A673 (cell line): ENCODE measurements at regions of chr2 and their contacts with region 1.

Region 1: GRCh38 chr2:216151313-216152030 is 42.3 kb downstream of the XRCC5 start:
- DNase-seq: peak; percentile 27
- H3K4me3 ChIP-seq: no peak overlapping the region
- H3K27ac ChIP-seq: no peak overlapping the region
- H3K4me1 ChIP-seq: no peaks in the 10 kb centered on the region
- H3K27me3 ChIP-seq: no peaks in the 10 kb centered on the region
- CTCF ChIP-seq: peak; percentile 42

Region 2: GRCh38 chr2:214378277-214379116 is 1773.0 kb before region 1 on chr2:
- CTCF ChIA-PET with region 1: no interaction called
- POLR2A ChIA-PET with region 1: no interaction called
- intact Hi-C with region 1: no loop called
- DNase-seq: no peak
- H3K4me3 ChIP-seq: no peak overlapping the region
- H3K27ac ChIP-seq: no peak overlapping the region
- H3K4me1 ChIP-seq: no peaks in the 10 kb centered on the region
- H3K27me3 ChIP-seq: no peaks in the 10 kb centered on the region
- CTCF ChIP-seq: no peak

Region 3: GRCh38 chr2:215249501-215249900 is 902.0 kb before region 1 on chr2:
- CTCF ChIA-PET with region 1: no interaction called
- POLR2A ChIA-PET with region 1: no interaction called
- intact Hi-C with region 1: no loop called
- DNase-seq: no peak
- H3K4me3 ChIP-seq: no peak overlapping the region
- H3K27ac ChIP-seq: no peak overlapping the region
- H3K4me1 ChIP-seq: no peaks in the 10 kb centered on the region
- H3K27me3 ChIP-seq: no peaks in the 10 kb centered on the region
- CTCF ChIP-seq: no peak

Region 4: DNA sequence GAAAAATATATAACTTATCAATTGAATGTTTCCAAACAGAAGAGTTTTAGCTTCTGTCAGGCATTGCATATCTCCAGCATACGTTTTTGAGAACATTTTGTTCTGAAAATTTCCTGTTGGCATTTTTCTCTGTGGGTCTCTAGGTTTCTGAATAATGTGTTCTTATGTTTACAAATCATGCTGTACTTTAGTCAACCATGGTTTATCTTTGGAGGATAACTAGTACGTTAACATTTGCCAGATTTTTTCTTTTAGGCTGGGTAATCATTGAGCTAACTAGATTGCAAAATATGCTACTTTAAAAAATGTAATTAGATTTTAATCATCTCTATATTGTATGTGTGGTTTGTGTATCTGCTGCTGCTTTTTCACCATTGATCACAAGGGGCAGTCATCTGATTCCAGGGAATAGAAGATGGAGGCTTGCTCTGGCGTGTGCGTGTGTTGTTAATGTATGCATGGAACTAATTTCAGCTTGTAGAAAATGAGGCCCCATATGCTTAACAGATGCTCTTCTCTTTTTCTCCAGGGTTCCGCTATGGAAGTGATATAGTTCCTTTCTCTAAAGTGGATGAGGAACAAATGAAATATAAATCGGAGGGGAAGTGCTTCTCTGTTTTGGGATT is 21.0 kb before region 1 on chr2:
- CTCF ChIA-PET with region 1: no interaction called
- POLR2A ChIA-PET with region 1: interaction called, 16 read pairs
- intact Hi-C with region 1: no loop called
- DNase-seq: no peak
- H3K4me3 ChIP-seq: no peak overlapping the region
- H3K27ac ChIP-seq: no peak overlapping the region
- H3K4me1 ChIP-seq: no peaks in the 10 kb centered on the region
- H3K27me3 ChIP-seq: no peaks in the 10 kb centered on the region
- CTCF ChIP-seq: 0 out of 2 replicates have a peak, but pooled peaks have one; percentile 21

Region 5: DNA sequence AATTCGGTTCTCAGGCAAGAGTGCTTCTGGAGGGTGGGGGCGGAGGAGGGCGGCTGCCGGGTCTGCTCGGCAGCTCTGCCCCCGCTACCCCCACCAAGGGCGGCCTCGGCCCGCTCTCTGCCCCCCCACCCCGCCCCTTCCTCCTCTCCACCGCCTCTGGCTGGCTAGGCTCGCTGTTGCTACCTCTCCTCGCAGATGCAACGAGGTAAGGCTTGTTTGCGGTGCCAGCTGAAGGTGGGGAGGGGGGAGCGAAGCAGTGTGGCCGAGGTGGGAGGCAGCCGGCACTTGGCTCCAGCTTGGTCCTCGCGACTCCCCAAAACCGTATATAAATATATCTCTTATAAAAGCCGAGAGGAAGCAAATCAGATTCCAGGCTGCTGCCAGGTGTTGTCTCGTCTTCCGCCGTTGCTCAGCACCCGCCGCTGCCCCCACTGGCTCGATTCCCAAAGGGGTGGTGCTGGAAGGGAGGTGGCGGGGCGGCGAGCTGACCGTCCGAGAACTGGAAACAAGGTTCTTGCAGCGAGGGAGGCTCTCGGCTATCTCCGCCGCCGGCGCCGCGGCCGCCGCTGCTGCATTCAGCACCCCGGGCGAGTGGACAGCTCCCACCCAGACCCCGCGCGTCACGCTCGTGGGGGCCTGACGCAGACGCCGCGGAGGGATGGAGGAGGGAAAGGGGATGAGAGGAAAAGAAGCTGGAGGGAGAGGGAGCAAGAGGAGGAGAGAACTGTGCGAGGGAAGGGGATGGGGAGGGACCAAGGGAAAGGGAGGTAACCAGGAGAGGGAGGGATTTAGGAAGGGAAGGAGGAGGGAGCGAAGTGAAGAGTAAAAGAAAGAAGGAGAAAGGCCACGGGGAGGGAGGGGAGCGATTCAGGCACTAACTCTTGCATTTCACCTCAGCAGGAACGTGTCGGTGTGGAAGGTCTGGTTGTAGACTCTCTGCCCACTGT is 220.6 kb after region 1 on chr2 and contains the start of gene MARCHF4:
- CTCF ChIA-PET with region 1: no interaction called
- POLR2A ChIA-PET with region 1: no interaction called
- intact Hi-C with region 1: no loop called
- DNase-seq: peak; percentile 83
- H3K4me3 ChIP-seq: peak within 1 kb of the TSS; percentile 48
- H3K27ac ChIP-seq: no peak within 1 kb of the TSS
- H3K4me1 ChIP-seq: peaks cover 28% of the 10 kb centered on the region
- H3K27me3 ChIP-seq: peaks cover 21% of the 10 kb centered on the region
- CTCF ChIP-seq: no peak
- total RNA-seq, gene MARCHF4: 2.4 and 6.1 TPM in 2 replicates

Region 6: DNA sequence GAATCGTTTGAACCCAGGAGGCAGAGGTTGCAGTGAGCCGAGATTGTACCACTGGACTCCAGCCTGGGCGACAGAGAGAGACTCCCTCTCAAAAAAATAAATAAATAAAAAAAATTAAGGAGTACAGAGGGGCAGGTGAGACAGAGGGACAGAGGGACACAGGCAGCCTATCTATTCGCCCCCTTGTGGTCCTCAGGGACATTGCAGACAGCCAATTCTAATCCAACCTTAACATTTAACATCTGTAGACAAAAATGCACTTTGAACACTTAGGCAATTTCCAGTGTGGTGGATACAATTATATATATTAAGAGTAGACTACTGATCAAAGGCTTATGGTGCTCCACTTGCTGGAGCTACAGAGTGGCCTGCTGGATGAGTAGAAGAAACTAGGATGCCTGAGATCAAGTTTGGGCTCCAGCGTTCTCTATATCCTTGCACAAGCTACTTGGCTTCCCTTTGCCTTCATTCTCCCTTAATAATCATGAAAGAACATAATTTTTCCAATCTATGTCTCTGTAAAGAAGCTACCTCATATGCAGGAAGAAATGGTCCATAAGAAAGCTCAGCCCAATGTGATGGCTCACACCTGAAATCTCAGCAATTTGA is 252.6 kb after region 1 on chr2:
- CTCF ChIA-PET with region 1: no interaction called
- POLR2A ChIA-PET with region 1: no interaction called
- intact Hi-C with region 1: loop called (anchors 10 kb)
- DNase-seq: peak; percentile 54
- H3K4me3 ChIP-seq: no peak overlapping the region
- H3K27ac ChIP-seq: no peak overlapping the region
- H3K4me1 ChIP-seq: no peaks in the 10 kb centered on the region
- H3K27me3 ChIP-seq: no peaks in the 10 kb centered on the region
- CTCF ChIP-seq: peak; percentile 83

Region 7: GRCh38 chr2:216807857-216808272 is 656.4 kb after region 1 on chr2:
- CTCF ChIA-PET with region 1: no interaction called
- POLR2A ChIA-PET with region 1: no interaction called
- intact Hi-C with region 1: no loop called
- DNase-seq: no peak
- H3K4me3 ChIP-seq: no peak overlapping the region
- H3K27ac ChIP-seq: no peak overlapping the region
- H3K4me1 ChIP-seq: no peaks in the 10 kb centered on the region
- H3K27me3 ChIP-seq: no peaks in the 10 kb centered on the region
- CTCF ChIP-seq: no peak